Heart left ventricle (tissue), 16 donors: ENCODE measurements at regions of chr21 and their contacts with region 1.

Region 1: GRCh38 chr21:28516991-28517592 is 475.6 kb downstream of the LTN1 start:
- DNase-seq: peak; percentile 69 to 81 (median 73)
- ATAC-seq: peak; percentile 95 to 97 (median 96)
- H3K4me3 ChIP-seq: no peak overlapping the region
- H3K27ac ChIP-seq: peak overlapping the region in 1 of 12 donors; percentile 2
- H3K4me1 ChIP-seq: peaks cover 0 to 20% (median 10%) of the 10 kb centered on the region in 12 donors
- H3K27me3 ChIP-seq: no peaks in the 10 kb centered on the region
- CTCF ChIP-seq: peak; percentile 59 to 82 (median 71)
- POLR2A ChIP-seq: no peak

Region 2: DNA sequence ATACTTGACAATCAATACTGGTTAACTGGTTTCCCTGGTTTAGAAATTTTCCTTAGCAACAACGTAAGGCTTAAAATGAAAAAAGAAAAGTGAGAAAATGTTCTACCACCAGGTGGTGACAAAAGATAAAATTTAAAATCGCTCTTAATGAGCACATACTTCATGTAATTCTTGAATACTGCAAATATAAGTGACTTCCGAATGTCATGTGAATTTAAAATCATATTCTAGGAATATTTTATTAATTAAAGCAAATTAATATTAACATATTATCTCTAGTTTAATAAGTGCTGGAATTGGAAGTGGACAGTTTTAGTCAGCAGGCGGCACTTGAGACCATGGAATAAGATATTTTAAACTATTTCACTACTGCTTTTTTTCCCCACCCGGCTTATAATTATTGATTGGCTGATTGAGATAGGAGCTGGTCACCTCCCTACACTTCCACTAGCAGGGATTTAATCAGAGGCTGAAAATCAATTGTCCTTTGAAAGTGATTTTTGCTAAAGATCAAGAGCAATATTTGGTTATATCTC is 1666.9 kb before region 1 on chr21:
- intact Hi-C with region 1: loop called in 5 of 10 experiments (anchors 2 to 10 kb)
- DNase-seq: no peak
- ATAC-seq: no peak
- H3K4me3 ChIP-seq: peak overlapping the region in 6 of 12 donors; percentile 3 to 40 (median 8)
- H3K27ac ChIP-seq: no peak overlapping the region
- H3K4me1 ChIP-seq: peaks cover 0 to 19% (median 5%) of the 10 kb centered on the region in 12 donors
- H3K27me3 ChIP-seq: peaks cover 0 to 14% (median 0%) of the 10 kb centered on the region in 9 donors
- CTCF ChIP-seq: peak; percentile 44 to 86 (median 72)
- POLR2A ChIP-seq: no peak

Region 3: DNA sequence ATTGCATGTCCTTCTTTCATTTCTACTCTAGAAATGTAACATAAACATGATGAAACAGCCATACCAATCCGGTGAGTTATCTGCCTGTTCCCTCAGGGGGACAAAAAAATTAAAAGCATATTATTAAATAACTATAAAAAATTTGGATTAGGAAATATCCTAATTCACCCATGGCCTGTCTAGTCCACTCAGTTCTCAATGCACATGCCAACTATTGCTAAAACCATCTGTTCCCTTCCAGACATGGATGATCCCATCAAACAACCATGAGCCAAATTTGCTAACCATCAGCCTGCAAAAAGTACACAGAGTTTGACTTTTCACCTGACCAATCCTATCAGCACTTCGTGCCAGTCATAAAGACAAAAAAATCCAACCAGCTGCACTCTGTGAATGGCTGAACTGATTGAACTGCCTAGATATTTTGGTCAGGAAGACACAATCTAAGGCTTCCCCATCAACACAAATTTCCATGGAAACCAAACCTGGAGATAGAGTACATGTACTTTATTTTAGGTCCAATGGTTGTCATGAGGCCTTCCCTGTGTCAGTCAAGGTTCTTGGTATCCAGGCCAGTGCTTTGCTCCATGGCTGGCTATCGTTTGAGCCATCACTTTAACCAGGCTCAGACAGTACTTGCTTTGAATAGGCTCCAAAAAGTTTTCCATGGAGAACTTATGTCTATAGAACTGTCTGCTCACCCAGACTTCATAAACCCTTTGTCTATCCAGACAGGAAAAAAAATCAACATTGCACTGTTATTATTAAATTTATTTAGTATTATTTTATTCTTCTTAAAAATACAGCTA is 95.2 kb before region 1 on chr21:
- intact Hi-C with region 1: no loop called
- DNase-seq: no peak
- ATAC-seq: peak in 1 of 4 donors; percentile 46
- H3K4me3 ChIP-seq: no peak overlapping the region
- H3K27ac ChIP-seq: no peak overlapping the region
- H3K4me1 ChIP-seq: peaks cover 0 to 7% (median 0%) of the 10 kb centered on the region in 12 donors
- H3K27me3 ChIP-seq: no peaks in the 10 kb centered on the region
- CTCF ChIP-seq: no peak
- POLR2A ChIP-seq: no peak

Region 4: GRCh38 chr21:28943631-28944030 is 426.5 kb after region 1 on chr21:
- intact Hi-C with region 1: loop called in 1 of 10 experiments (anchors 10 kb)
- DNase-seq: no peak
- ATAC-seq: no peak
- H3K4me3 ChIP-seq: no peak overlapping the region
- H3K27ac ChIP-seq: no peak overlapping the region
- H3K4me1 ChIP-seq: peaks cover 0 to 8% (median 0%) of the 10 kb centered on the region in 12 donors
- H3K27me3 ChIP-seq: no peaks in the 10 kb centered on the region
- CTCF ChIP-seq: no peak
- POLR2A ChIP-seq: no peak

Region 5: GRCh38 chr21:29217818-29218291 is 700.8 kb after region 1 on chr21:
- intact Hi-C with region 1: no loop called
- DNase-seq: no peak
- ATAC-seq: peak in 2 of 4 donors; percentile 34 to 82
- H3K4me3 ChIP-seq: no peak overlapping the region
- H3K27ac ChIP-seq: peak overlapping the region in 1 of 12 donors; percentile 70
- H3K4me1 ChIP-seq: peaks cover 0 to 28% (median 0%) of the 10 kb centered on the region in 12 donors
- H3K27me3 ChIP-seq: no peaks in the 10 kb centered on the region
- CTCF ChIP-seq: no peak
- POLR2A ChIP-seq: no peak